A549 (cell line): ENCODE measurements at regions of chr4 and their contacts with region 1.

Region 1: DNA sequence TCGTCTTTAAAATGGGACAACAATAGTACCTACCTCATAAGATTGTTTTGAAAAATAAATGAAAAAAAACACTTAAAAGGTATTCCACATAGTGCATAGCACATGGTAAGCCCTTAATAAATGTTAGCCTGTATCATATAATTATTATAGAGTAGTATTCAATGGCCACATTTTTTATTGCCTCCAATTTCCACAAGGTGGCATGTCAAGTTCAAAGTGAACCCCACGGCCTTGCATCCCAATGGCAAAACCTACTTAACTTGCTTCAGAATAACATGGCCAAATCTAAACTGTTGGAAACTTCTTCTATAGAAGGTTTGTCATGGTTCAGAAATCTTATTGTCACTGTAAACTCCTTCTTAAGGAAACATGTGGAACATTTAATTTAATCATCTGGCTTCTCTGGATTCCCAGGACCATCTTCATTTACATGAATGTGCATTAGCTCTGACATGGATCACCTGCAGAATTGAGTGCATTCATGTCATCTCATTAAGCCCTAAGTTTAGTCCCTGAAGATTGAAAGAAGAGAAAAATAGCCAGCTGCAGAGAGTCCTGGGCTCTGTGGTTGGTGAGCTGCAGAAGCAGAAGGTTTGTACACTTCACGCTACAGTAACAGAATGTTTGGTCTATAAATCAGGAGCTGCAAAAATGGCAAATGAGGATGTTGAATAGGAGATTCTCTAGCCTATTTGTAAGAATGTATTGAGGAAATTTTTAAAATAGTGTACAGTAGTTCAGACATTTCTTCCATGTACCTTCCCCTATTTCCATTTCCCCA is 61.0 kb downstream of the ANXA3 start:
- DNase-seq: peak; percentile 11 to 41
- ATAC-seq: peak; percentile 55 to 89; a peak in 3 of 6 replicates
- H3K4me3 ChIP-seq: no peak overlapping the region
- H3K27ac ChIP-seq: no peak overlapping the region
- H3K4me1 ChIP-seq: no peaks in the 10 kb centered on the region
- CTCF ChIP-seq: peak; percentile 66
- EP300 ChIP-seq: no peak
- POLR2A ChIP-seq: no peak
- RAD21 ChIP-seq: peak; percentile 76 to 80

Region 2: DNA sequence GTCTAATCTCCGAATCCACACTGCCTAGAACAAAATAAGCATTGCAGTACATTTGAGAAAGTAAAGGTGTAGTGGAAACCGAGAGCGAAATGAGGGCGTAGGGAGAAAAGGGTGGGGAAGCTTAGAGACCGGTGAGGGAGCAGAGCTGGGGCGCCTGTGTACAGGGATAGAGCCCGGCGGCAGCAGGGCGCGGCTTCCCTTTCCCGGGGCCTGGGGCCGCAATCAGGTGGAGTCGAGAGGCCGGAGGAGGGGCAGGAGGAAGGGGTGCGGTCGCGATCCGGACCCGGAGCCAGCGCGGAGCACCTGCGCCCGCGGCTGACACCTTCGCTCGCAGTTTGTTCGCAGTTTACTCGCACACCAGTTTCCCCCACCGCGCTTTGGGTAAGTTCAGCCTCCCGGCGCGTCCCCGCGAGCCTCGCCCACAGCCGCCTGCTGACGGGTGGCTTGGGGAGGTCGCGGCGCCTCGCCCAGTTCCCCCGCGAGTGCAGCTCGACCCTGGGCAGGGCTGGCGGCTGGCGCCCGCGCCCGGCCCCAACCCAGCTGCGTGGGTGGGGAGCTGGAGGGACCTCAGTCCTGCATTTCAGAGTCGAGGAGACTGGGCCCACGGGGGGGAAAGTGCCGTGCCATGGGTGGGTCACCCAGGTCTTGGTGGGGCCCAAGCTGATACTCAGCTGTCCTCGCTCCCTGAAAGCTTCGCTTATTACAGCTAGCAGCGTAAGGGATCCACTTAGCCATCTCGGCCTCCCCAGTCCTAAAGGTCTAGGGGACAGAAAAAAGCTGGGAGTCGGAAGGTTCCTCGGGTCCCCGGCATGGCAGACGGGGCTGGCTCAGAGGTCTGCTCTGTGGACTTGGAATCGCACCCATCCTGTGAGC is 60.9 kb before region 1 on chr4 and contains the start of gene ANXA3:
- CTCF ChIA-PET with region 1: no interaction called
- POLR2A ChIA-PET with region 1: no interaction called
- DNase-seq: peak in 1 of 2 experiments; percentile 57
- ATAC-seq: peak; percentile 81 to 87
- H3K4me3 ChIP-seq: peak within 1 kb of the TSS; percentile 69
- H3K27ac ChIP-seq: peak within 1 kb of the TSS; percentile 94 to 99
- H3K4me1 ChIP-seq: peaks cover 31% of the 10 kb centered on the region
- CTCF ChIP-seq: no peak
- EP300 ChIP-seq: no peak
- POLR2A ChIP-seq: no peak
- RAD21 ChIP-seq: no peak
- polyA plus RNA-seq, gene ANXA3: 126 and 145 TPM in 2 replicates

Region 3: GRCh38 chr4:78864405-78865024 is 251.9 kb after region 1 on chr4:
- CTCF ChIA-PET with region 1: interaction called, 28 read pairs
- POLR2A ChIA-PET with region 1: no interaction called
- DNase-seq: peak; percentile 18 to 76
- ATAC-seq: peak in 1 of 2 experiments; percentile 69; a peak in 3 of 6 replicates
- H3K4me3 ChIP-seq: no peak overlapping the region
- H3K27ac ChIP-seq: no peak overlapping the region
- H3K4me1 ChIP-seq: peaks cover 23% of the 10 kb centered on the region
- CTCF ChIP-seq: peak; percentile 73
- EP300 ChIP-seq: no peak
- POLR2A ChIP-seq: no peak
- RAD21 ChIP-seq: peak; percentile 72 to 82